Head of caudate nucleus (tissue), 42 donors: ENCODE measurements at regions of chr14 and their contacts with region 1.

Region 1: GRCh38 chr14:21269252-21270046 is at the start of gene HNRNPC:
- DNase-seq: peak; percentile 96 to 100 (median 100)

Region 2: DNA sequence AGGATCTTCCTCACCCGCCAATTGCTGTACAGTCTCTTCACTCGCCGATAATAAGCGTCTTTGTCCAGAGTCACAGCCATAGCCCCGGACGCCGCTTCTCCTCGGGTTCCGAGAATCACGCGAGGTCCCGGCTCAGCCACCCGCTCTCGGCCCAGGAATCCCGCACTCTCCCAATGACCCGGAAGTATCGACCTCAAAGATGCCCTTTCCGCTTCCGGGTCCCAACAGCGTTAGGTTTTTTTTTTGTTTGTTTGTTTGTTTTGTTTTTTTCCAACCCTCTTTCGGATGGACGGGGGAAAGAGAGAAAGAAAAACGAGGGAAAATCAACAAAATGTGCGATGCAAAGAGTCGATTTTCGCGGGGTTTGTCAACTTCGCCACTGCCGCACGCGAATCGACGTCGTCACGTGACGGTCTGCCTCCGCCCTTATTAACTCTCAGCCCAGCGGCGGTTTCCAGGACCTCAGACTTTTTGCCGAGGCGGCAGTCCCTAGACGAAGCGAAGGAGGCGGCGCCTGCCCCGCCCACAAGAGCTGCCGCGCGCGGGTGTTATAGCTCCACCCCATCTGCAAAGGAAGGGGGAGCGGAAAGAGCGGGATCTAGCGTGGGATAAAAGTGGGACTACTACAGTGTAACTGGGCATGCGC is 114.5 kb after region 1 on chr14 and contains the start of gene SUPT16H:
- intact Hi-C with region 1: loop called (anchors 5 kb)
- DNase-seq: peak; percentile 85 to 98 (median 94)